B cell (primary cell): ENCODE measurements at regions of chr10 and their contacts with region 1.

Region 1: DNA sequence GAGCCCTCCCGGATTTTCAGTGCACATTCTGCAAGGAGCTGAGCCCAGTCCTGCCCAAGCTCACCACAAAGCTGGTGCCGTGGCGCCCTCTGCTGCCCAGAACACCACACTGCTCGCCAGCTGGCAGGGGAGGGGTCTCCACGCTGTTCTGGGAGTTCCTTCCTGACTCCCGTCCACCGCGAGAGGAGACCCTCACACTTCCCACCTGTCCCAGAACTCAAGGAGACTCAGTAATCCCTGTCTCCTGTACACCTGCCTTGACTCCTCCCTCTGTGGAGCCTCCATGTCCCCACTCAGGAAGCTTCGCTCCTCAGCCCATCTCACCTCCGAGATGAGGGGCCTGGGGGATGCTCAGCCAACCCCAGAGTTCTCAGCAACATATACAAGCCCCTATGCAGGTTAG is 11.3 kb downstream of the C10orf105 start:
- DNase-seq: peak; percentile 74
- ATAC-seq: peak; percentile 77
- H3K4me3 ChIP-seq: no peak overlapping the region
- H3K4me3 Mint-ChIP-seq: no peak overlapping the region
- H3K27ac ChIP-seq: no peak overlapping the region
- H3K27ac Mint-ChIP-seq: no peak overlapping the region
- H3K4me1 ChIP-seq: peaks cover 16 to 22% of the 10 kb centered on the region in 2 donors
- H3K4me1 Mint-ChIP-seq: peaks cover 29% of the 10 kb centered on the region
- H3K27me3 ChIP-seq: no peaks in the 10 kb centered on the region
- H3K27me3 Mint-ChIP-seq: no peaks in the 10 kb centered on the region
- CTCF ChIP-seq: peak; percentile 89

Region 2: DNA sequence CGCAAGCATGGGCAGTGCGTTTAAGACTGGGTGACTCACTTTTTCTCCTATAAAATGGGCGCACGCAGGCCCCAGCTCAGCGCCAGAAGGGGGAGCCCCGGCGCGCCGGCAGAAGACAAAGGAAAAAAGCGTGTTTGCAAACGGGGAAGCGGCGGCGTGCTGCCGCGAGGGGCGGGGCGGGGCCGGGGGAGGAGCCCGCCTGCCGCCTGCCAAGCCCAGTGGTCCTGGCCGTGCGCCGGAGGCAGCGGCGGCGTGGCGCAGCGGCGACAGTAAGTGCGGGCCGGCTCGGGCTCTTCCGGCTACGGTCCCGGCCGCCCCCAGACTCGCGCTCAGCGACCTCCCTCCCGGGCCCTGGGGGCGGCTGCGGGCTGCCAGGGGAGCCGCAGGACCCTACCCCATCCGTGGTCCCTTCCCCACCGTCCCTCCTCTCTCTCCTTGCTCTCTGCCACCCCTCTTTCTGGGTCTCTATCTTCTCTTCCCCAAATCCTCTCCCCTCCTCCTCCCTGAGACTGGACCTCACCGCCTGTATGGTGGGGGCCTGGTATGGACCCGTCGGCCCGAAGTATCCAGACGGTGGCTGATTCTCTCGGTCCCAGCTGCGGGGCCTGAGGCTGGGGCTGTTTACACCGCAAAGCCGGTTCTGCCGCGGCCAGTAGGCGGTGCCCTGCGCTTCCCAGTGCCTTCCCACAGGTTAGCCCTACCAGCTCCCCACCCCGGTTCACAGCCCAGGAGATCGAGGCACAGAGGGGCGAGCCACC is 389.1 kb before region 1 on chr10 and contains the start of gene SLC29A3:
- CTCF ChIA-PET with region 1: interaction called, 118 read pairs
- POLR2A ChIA-PET with region 1: interaction called, 3 read pairs
- intact Hi-C with region 1: loop called (anchors 1 kb)
- DNase-seq: peak; percentile 88
- ATAC-seq: peak; percentile 90
- H3K4me3 ChIP-seq: peak within 1 kb of the TSS; percentile 34 to 84 (median 78)
- H3K4me3 Mint-ChIP-seq: peak within 1 kb of the TSS; percentile 99
- H3K27ac ChIP-seq: peak within 1 kb of the TSS in 1 of 2 donors; percentile 72
- H3K27ac Mint-ChIP-seq: peak within 1 kb of the TSS; percentile 94
- H3K4me1 ChIP-seq: peaks cover 8 to 18% of the 10 kb centered on the region in 2 donors
- H3K4me1 Mint-ChIP-seq: peaks cover 17% of the 10 kb centered on the region
- H3K27me3 ChIP-seq: no peaks in the 10 kb centered on the region
- H3K27me3 Mint-ChIP-seq: no peaks in the 10 kb centered on the region
- CTCF ChIP-seq: peak; percentile 71
- total RNA-seq, gene SLC29A3: 6.7 and 8.2 TPM in 2 replicates

Region 3: GRCh38 chr10:71383972-71384687 is 324.2 kb before region 1 on chr10:
- CTCF ChIA-PET with region 1: interaction called, 20 read pairs
- POLR2A ChIA-PET with region 1: no interaction called
- intact Hi-C with region 1: loop called (anchors 1 kb)
- DNase-seq: peak; percentile 79
- ATAC-seq: peak; percentile 99
- H3K4me3 ChIP-seq: no peak overlapping the region
- H3K4me3 Mint-ChIP-seq: no peak overlapping the region
- H3K27ac ChIP-seq: no peak overlapping the region
- H3K27ac Mint-ChIP-seq: no peak overlapping the region
- H3K4me1 ChIP-seq: peaks cover 2 to 7% of the 10 kb centered on the region in 2 donors
- H3K4me1 Mint-ChIP-seq: peaks cover 7% of the 10 kb centered on the region
- H3K27me3 ChIP-seq: peaks cover 0 to 7% (median 0%) of the 10 kb centered on the region in 4 experiments
- H3K27me3 Mint-ChIP-seq: peaks cover 7% of the 10 kb centered on the region
- CTCF ChIP-seq: peak; percentile 89

Region 4: DNA sequence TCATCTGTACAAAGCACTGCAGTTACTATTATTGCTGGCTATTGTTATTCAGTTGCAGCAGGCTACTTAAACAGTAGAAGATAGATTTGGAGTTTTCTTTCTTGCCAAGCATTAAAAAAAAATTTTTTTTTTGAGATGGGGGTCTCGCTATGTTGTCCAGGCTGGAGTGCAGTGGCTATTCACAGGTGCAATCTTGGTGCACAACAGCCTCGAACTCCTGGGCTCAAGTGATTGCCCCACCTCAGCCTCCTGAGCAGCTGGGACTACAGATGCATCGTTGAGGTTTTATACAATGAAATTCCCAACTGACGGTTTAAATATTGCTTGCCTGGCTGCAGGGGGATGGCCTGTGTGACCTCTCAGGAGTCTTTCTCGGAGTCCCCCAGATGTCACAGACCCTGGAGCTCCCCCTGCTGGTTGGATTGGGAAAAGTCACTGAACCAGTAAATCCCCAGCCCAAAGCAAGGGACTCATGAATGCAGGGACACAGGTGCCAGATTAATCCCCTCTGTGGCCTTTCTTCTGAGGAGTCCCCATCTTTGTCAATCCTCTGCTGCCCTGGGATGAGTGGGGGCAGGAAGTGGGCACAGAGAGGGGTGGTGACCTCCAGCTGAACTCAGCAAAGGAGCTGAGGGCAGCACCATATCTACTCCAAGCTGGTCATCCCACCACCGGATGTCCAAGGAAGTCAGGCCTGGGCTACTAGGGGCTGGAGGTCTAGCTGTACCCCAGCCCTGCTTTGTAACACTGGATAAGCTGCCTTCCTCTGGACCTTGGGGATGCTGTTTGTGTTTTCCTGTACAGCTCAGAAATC is 138.3 kb before region 1 on chr10:
- CTCF ChIA-PET with region 1: interaction called, 36 read pairs
- POLR2A ChIA-PET with region 1: no interaction called
- intact Hi-C with region 1: loop called (anchors 2 kb)
- DNase-seq: peak; percentile 77
- ATAC-seq: peak; percentile 57
- H3K4me3 ChIP-seq: no peak overlapping the region
- H3K4me3 Mint-ChIP-seq: no peak overlapping the region
- H3K27ac ChIP-seq: no peak overlapping the region
- H3K27ac Mint-ChIP-seq: no peak overlapping the region
- H3K4me1 ChIP-seq: no peaks in the 10 kb centered on the region
- H3K4me1 Mint-ChIP-seq: no peaks in the 10 kb centered on the region
- H3K27me3 ChIP-seq: no peaks in the 10 kb centered on the region
- H3K27me3 Mint-ChIP-seq: peaks cover 5% of the 10 kb centered on the region
- CTCF ChIP-seq: peak; percentile 86

Region 5: DNA sequence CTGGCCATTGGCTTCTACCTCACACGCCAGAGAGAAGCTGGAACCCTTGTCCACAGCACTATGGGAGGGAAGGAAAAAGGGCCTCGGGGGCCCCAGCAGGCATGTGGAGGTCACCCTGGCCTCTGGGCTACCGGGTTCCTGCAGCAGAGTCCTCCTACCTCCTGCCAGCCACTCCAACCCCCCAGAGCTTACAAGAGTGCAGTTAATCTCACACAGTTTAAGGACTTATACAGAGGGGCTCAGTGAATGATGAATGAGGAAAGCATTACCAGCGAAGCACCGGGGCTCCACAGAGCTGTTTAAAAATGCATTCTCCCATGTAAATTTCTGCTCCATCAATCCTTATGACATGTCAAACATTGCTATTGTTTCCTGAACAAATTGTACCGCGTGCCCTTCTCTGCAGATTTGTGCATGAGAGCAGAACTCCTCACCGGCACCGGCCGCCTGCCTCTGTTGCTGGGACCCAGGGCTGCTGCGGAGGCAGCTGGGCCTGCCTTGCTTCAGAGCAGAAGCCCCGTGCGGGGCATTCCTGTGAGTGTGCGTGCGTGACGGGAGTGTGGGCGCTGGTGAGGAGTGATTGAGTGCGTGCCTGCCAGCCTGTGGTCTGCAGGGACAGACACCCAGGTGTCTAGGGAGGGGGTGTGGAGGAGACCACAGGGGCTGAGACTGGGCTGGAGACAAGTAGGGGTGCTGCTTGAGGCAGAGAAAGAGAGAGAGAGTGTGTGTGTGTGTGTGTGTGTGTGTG is 41.5 kb before region 1 on chr10:
- CTCF ChIA-PET with region 1: interaction called, 48 read pairs
- POLR2A ChIA-PET with region 1: no interaction called
- intact Hi-C with region 1: loop called (anchors 2 kb)
- DNase-seq: peak; percentile 55
- ATAC-seq: peak; percentile 46
- H3K4me3 ChIP-seq: no peak overlapping the region
- H3K4me3 Mint-ChIP-seq: peak overlapping the region; percentile 0
- H3K27ac ChIP-seq: no peak overlapping the region
- H3K27ac Mint-ChIP-seq: peak overlapping the region; percentile 2
- H3K4me1 ChIP-seq: peaks cover 19 to 22% of the 10 kb centered on the region in 2 donors
- H3K4me1 Mint-ChIP-seq: peaks cover 17% of the 10 kb centered on the region
- H3K27me3 ChIP-seq: no peaks in the 10 kb centered on the region
- H3K27me3 Mint-ChIP-seq: no peaks in the 10 kb centered on the region
- CTCF ChIP-seq: no peak

Region 6: DNA sequence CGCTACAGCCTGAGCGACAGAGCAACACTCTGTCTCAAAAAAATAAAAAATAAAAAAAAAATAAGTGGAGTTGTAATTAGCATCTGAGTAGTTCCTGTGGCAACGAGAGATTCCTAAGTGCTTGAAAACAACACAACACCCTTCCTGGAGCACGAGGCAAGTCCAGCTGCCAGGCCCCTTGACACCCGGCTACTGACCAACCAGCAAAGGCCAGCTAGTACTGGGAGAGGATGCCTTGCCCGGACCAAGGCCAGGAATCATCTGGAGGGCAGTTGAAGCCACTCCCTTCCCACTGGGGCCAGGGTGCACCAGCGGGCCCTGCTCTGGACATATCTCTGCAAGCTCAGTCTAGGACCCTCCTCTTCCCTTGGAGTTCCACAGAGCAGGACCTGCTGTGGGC is 10.7 kb after region 1 on chr10:
- CTCF ChIA-PET with region 1: interaction called, 17 read pairs
- POLR2A ChIA-PET with region 1: no interaction called
- intact Hi-C with region 1: no loop called
- DNase-seq: no peak
- ATAC-seq: no peak
- H3K4me3 ChIP-seq: no peak overlapping the region
- H3K4me3 Mint-ChIP-seq: no peak overlapping the region
- H3K27ac ChIP-seq: no peak overlapping the region
- H3K27ac Mint-ChIP-seq: peak overlapping the region; percentile 37
- H3K4me1 ChIP-seq: peaks cover 17 to 23% of the 10 kb centered on the region in 2 donors
- H3K4me1 Mint-ChIP-seq: peaks cover 15% of the 10 kb centered on the region
- H3K27me3 ChIP-seq: peaks cover 0 to 3% (median 0%) of the 10 kb centered on the region in 4 experiments
- H3K27me3 Mint-ChIP-seq: peaks cover 4% of the 10 kb centered on the region
- CTCF ChIP-seq: no peak

Region 7: GRCh38 chr10:71812016-71812912 is 104.0 kb after region 1 on chr10:
- CTCF ChIA-PET with region 1: interaction called, 52 read pairs
- POLR2A ChIA-PET with region 1: no interaction called
- intact Hi-C with region 1: loop called (anchors 1 kb)
- DNase-seq: peak; percentile 85
- ATAC-seq: peak; percentile 93
- H3K4me3 ChIP-seq: no peak overlapping the region
- H3K4me3 Mint-ChIP-seq: no peak overlapping the region
- H3K27ac ChIP-seq: no peak overlapping the region
- H3K27ac Mint-ChIP-seq: no peak overlapping the region
- H3K4me1 ChIP-seq: peaks cover 5 to 11% of the 10 kb centered on the region in 2 donors
- H3K4me1 Mint-ChIP-seq: peaks cover 6% of the 10 kb centered on the region
- H3K27me3 ChIP-seq: no peaks in the 10 kb centered on the region
- H3K27me3 Mint-ChIP-seq: peaks cover 4% of the 10 kb centered on the region
- CTCF ChIP-seq: peak; percentile 84